K562 (cell line): ENCODE measurements at regions of chr14 and their contacts with region 1.

Region 1: DNA sequence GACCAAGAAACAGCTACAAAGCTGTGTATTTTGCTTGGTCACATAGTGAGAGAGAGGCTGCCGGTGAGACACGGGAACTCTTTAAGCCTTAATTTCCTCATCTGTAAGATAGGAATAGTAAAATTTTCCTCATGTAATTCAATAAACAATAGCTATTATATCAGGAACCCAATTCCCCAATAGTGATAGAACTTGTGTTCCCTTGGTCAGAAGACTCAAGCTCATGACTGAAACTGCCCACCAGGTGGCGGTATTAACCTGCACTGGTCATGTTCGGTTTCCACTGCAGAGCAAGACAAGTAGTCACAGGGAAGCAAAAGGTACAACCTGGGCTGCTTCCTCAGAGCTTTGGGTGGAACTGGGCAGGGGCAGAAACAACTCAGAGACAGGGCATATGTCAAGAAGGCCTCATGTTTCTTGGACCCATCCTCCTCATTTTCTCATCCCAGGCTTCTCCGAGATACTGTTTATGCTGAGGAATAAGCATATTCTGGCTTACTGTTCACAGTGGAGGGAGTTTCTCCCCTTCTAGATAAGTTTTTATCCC is 4.2 kb upstream of the AJUBA start:
- DNase-seq: peak; percentile 76 to 91 (median 77)
- ATAC-seq: peak; percentile 79
- H3K4me3 ChIP-seq: no peak overlapping the region
- H3K27ac ChIP-seq: no peak overlapping the region
- H3K4me1 ChIP-seq: peaks cover 2 to 11% of the 10 kb centered on the region in 2 experiments; a peak in 3 of 5 replicates
- H3K27me3 ChIP-seq: no peaks in the 10 kb centered on the region
- CTCF ChIP-seq: peak; percentile 90 to 97 (median 93)
- EP300 ChIP-seq: no peak
- POLR2A ChIP-seq: no peak
- RAD21 ChIP-seq: peak; percentile 94 to 97

Region 2: GRCh38 chr14:22556990-22557623 is 429.5 kb before region 1 on chr14:
- CTCF ChIA-PET with region 1: interaction called, 18 read pairs
- POLR2A ChIA-PET with region 1: no interaction called
- in situ Hi-C with region 1: no loop called
- intact Hi-C with region 1: no loop called
- DNase-seq: peak; percentile 80 to 88 (median 82)
- ATAC-seq: peak; percentile 88
- H3K4me3 ChIP-seq: 0 out of 2 replicates have a peak overlapping the region, but pooled peaks have one; percentile 21
- H3K27ac ChIP-seq: peak overlapping the region; percentile 71
- H3K4me1 ChIP-seq: peaks cover 32 to 42% of the 10 kb centered on the region in 2 experiments
- H3K27me3 ChIP-seq: no peaks in the 10 kb centered on the region
- CTCF ChIP-seq: peak; percentile 75 to 98 (median 90); a peak in 5 of 6 replicates
- EP300 ChIP-seq: no peak
- POLR2A ChIP-seq: no peak
- RAD21 ChIP-seq: peak; percentile 93 to 96

Region 3: GRCh38 chr14:22886500-22887259 is 99.9 kb before region 1 on chr14:
- CTCF ChIA-PET with region 1: no interaction called
- POLR2A ChIA-PET with region 1: no interaction called
- in situ Hi-C with region 1: no loop called
- intact Hi-C with region 1: no loop called
- DNase-seq: peak; percentile 91 to 93 (median 92)
- ATAC-seq: peak; percentile 84
- H3K4me3 ChIP-seq: peak overlapping the region; percentile 63
- H3K27ac ChIP-seq: peak overlapping the region; percentile 81
- H3K4me1 ChIP-seq: peaks cover 26 to 40% of the 10 kb centered on the region in 2 experiments
- H3K27me3 ChIP-seq: no peaks in the 10 kb centered on the region
- CTCF ChIP-seq: peak in 2 of 3 experiments; percentile 36 to 41; a peak in 4 of 6 replicates
- EP300 ChIP-seq: no peak
- POLR2A ChIP-seq: peak; percentile 84
- RAD21 ChIP-seq: no peak

Region 4: GRCh38 chr14:22929104-22929847 is 57.3 kb before region 1 on chr14 and contains the start of gene PRMT5:
- CTCF ChIA-PET with region 1: interaction called, 21 read pairs
- POLR2A ChIA-PET with region 1: interaction called, 9 read pairs
- in situ Hi-C with region 1: loop called (anchors 5 kb)
- intact Hi-C with region 1: loop called (anchors 1 kb)
- DNase-seq: peak; percentile 94 to 99 (median 96)
- ATAC-seq: peak; percentile 96
- H3K4me3 ChIP-seq: peak within 1 kb of the TSS; percentile 80
- H3K27ac ChIP-seq: peak within 1 kb of the TSS; percentile 88
- H3K4me1 ChIP-seq: peaks cover 5 to 14% of the 10 kb centered on the region in 2 experiments; a peak in 3 of 5 replicates
- H3K27me3 ChIP-seq: no peaks in the 10 kb centered on the region
- CTCF ChIP-seq: peak in 1 of 3 experiments; percentile 26; a peak in 2 of 6 replicates
- EP300 ChIP-seq: peak; percentile 77
- POLR2A ChIP-seq: peak; percentile 99
- RAD21 ChIP-seq: no peak
- polyA plus RNA-seq, gene PRMT5: 114 to 155 TPM

Region 5: GRCh38 chr14:22973217-22974032 is 13.2 kb before region 1 on chr14:
- CTCF ChIA-PET with region 1: interaction called, 22 read pairs
- POLR2A ChIA-PET with region 1: interaction called, 9 read pairs
- in situ Hi-C with region 1: no loop called
- intact Hi-C with region 1: loop called (anchors 1 kb)
- DNase-seq: peak; percentile 43 to 75 (median 54)
- ATAC-seq: peak; percentile 77
- H3K4me3 ChIP-seq: no peak overlapping the region
- H3K27ac ChIP-seq: no peak overlapping the region
- H3K4me1 ChIP-seq: peaks cover 19 to 21% of the 10 kb centered on the region in 2 experiments
- H3K27me3 ChIP-seq: no peaks in the 10 kb centered on the region
- CTCF ChIP-seq: peak; percentile 81 to 83 (median 81)
- EP300 ChIP-seq: no peak
- POLR2A ChIP-seq: no peak
- RAD21 ChIP-seq: peak; percentile 69 to 88

Region 6: GRCh38 chr14:23057757-23058653 is 71.4 kb after region 1 on chr14:
- CTCF ChIA-PET with region 1: interaction called, 141 read pairs
- POLR2A ChIA-PET with region 1: interaction called, 17 read pairs
- in situ Hi-C with region 1: no loop called
- intact Hi-C with region 1: loop called (anchors 1 kb)
- DNase-seq: peak; percentile 78 to 94 (median 84)
- ATAC-seq: peak; percentile 83
- H3K4me3 ChIP-seq: peak overlapping the region; percentile 69
- H3K27ac ChIP-seq: peak overlapping the region; percentile 64
- H3K4me1 ChIP-seq: peaks cover 11 to 45% of the 10 kb centered on the region in 2 experiments
- H3K27me3 ChIP-seq: no peaks in the 10 kb centered on the region
- CTCF ChIP-seq: peak; percentile 92 to 96 (median 94)
- EP300 ChIP-seq: no peak
- POLR2A ChIP-seq: peak; percentile 67
- RAD21 ChIP-seq: peak; percentile 85 to 89